Esophagus muscularis mucosa (tissue), 4 donors: ENCODE measurements at regions of chr11 and their contacts with region 1.

Region 1: DNA sequence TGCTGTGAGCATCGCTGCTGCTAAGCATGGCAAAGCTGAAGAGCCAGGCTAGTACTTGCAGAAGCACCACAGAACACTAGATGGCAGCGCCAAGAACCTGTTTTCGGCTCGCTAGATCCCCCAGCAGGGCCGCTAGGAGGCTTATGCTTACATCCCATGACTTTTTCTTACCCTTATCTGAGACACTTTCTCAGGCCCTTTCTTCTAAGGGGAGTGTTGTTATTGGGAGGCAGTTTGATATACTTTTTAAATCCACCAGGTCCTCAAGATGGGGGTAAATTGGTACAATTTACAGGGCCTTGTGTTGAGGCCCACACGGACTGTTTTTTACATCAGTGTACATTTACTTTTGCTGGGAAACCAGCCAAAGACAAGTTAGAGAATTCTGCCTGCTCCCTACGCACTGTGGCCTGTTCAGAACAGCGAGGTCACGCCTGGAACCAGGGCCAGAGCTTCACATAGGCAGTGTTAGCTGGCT is 4.0 kb downstream of the TRIM6 start:
- DNase-seq: no peak
- H3K4me3 ChIP-seq: no peak overlapping the region
- H3K27ac ChIP-seq: peak overlapping the region; percentile 61 to 74 (median 72)
- H3K4me1 ChIP-seq: peaks cover 4 to 44% (median 33%) of the 10 kb centered on the region in 4 donors
- H3K27me3 ChIP-seq: no peaks in the 10 kb centered on the region
- CTCF ChIP-seq: peak; percentile 61 to 89 (median 63)
- EP300 ChIP-seq: no peak
- POLR2A ChIP-seq: no peak

Region 2: DNA sequence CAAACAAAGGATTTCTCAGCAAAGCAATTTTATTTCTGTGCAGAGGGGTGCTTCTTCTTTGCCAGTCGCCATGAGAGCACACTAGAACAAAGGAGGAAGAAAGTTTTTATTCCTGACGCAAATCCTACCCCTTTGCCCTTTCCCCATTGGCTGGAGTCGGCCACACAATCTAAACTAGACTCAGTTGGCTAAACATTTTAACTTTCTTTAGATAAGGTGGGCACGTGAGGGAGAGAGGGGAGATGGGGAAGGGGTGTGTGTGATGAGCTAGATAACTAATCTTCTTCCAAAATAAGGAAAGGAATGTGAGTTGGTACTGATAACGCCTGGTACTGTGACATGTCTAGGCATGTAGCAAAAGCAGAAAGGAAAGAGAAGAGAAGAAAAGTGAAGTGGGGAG is 89.8 kb after region 1 on chr11:
- intact Hi-C with region 1: loop called (anchors 5 kb)
- DNase-seq: peak; percentile 26
- H3K4me3 ChIP-seq: peak overlapping the region; percentile 47 to 61 (median 56)
- H3K27ac ChIP-seq: peak overlapping the region; percentile 81 to 89 (median 85)
- H3K4me1 ChIP-seq: peaks cover 3 to 59% (median 44%) of the 10 kb centered on the region in 4 donors
- H3K27me3 ChIP-seq: no peaks in the 10 kb centered on the region
- CTCF ChIP-seq: no peak
- EP300 ChIP-seq: no peak
- POLR2A ChIP-seq: no peak